ENCODE measurements at regions of chr7 and their contacts with region 1.

Region 1: GRCh38 chr7:156640257-156640948 is at the start of gene RNF32:
- DNase-seq: peak; percentile 98
- ATAC-seq: peak; percentile 82
- H3K4me3 ChIP-seq: peak within 1 kb of the TSS in 4 of 5 experiments; percentile 64 to 96 (median 85)
- H3K4me3 Mint-ChIP-seq: peak within 1 kb of the TSS; percentile 96
- H3K27ac ChIP-seq: peak within 1 kb of the TSS; percentile 80 to 98
- H3K27ac Mint-ChIP-seq: peak within 1 kb of the TSS; percentile 97
- H3K4me1 ChIP-seq: peaks cover 11 to 26% of the 10 kb centered on the region in 2 donors
- H3K4me1 Mint-ChIP-seq: peaks cover 36% of the 10 kb centered on the region
- H3K27me3 ChIP-seq: peaks cover 0 to 4% (median 0%) of the 10 kb centered on the region in 4 experiments
- H3K27me3 Mint-ChIP-seq: no peaks in the 10 kb centered on the region
- CTCF ChIP-seq: no peak
- total RNA-seq, gene RNF32: 2.3 and 3.4 TPM in 2 replicates

Region 2: DNA sequence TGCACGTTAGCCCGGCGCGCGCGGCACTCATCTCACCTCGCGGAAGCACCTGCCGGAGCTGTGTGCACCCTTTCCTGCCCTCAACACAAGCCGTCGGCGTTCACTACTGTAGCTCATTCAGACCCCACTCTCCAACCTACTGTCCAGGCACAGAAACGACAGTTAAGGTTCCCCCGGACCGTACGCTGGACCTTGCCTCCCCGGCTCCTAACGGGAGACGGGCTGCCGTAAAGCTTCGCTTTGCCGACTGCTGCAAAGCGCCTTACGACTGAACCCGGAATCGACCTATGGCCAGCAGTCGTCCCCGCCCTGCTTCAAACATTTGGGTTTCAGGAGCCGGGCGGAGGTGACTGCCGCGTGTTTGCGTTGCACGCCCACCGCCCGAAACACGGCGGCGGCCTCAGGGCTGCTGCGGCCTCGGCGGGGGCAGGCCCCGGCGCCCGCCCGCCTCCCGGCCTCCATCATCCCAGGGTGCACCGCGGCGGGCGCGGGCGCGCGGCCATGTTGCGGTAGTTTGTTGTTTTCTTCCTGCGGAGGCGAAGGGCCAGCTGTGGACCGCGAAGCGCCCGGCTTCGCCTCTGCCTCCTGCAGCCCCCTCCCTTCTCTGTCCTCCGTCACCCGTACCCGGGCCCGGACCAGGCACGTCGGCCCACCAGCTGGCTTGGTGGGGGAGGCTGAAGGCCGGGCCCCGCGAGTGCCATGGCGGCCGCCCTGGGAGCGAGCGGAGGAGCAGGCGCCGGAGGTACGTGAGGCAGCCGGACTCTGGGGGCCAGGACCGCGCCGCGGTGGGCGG is 996.0 kb before region 1 on chr7 and contains the start of gene RBM33:
- CTCF ChIA-PET with region 1: no interaction called
- POLR2A ChIA-PET with region 1: no interaction called
- intact Hi-C with region 1: loop called (anchors 5 kb)
- DNase-seq: peak; percentile 93
- ATAC-seq: peak; percentile 74
- H3K4me3 ChIP-seq: peak within 1 kb of the TSS; percentile 70 to 96 (median 90)
- H3K4me3 Mint-ChIP-seq: peak within 1 kb of the TSS; percentile 92
- H3K27ac ChIP-seq: peak within 1 kb of the TSS; percentile 88 to 92
- H3K27ac Mint-ChIP-seq: peak within 1 kb of the TSS; percentile 96
- H3K4me1 ChIP-seq: peaks cover 20 to 25% of the 10 kb centered on the region in 2 donors
- H3K4me1 Mint-ChIP-seq: peaks cover 45% of the 10 kb centered on the region
- H3K27me3 ChIP-seq: no peaks in the 10 kb centered on the region
- H3K27me3 Mint-ChIP-seq: no peaks in the 10 kb centered on the region
- CTCF ChIP-seq: no peak
- total RNA-seq, gene RBM33: 185 and 189 TPM in 2 replicates

Region 3: DNA sequence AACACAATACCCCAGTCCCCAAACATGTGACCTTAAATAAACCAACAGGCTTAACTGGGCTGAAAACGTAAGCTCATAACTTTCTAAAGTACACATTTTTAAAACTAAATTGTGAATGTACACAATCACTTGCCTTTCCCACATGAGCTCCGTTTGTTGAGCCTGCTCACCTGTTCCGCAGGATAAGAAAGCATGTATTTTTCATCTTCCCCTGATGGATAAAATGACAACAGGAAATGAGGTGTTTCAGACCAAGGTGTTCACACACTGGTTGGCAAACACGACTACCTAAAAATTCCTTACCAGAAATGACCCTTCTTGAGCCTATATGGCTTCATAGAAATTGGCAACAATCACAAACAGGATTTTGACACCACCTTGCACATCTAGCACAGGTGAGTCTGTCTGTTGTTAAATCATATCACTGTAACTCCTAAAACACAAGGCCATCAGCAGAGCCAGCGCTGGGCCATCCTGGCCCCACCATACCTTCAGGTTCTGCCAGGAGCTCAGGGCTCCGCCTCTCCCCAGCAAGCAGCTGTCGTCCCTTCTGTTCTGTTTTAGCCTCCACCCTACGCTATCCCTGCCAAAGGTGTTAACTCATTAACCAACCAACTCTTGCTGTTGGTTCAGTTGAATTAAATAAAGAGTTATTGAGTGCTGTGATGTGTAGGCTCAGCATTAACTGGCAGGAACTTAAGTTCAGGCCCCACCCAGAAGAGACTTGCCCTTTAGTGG is 73.4 kb before region 1 on chr7:
- CTCF ChIA-PET with region 1: no interaction called
- POLR2A ChIA-PET with region 1: no interaction called
- intact Hi-C with region 1: no loop called
- DNase-seq: no peak
- ATAC-seq: no peak
- H3K4me3 ChIP-seq: no peak overlapping the region
- H3K4me3 Mint-ChIP-seq: no peak overlapping the region
- H3K27ac ChIP-seq: no peak overlapping the region
- H3K27ac Mint-ChIP-seq: no peak overlapping the region
- H3K4me1 ChIP-seq: no peaks in the 10 kb centered on the region
- H3K4me1 Mint-ChIP-seq: peaks cover 7% of the 10 kb centered on the region
- H3K27me3 ChIP-seq: peaks cover 0 to 2% (median 0%) of the 10 kb centered on the region in 4 experiments
- H3K27me3 Mint-ChIP-seq: peaks cover 13% of the 10 kb centered on the region
- CTCF ChIP-seq: no peak

Region 4: GRCh38 chr7:156693627-156694026 is 53.2 kb after region 1 on chr7:
- CTCF ChIA-PET with region 1: no interaction called
- POLR2A ChIA-PET with region 1: no interaction called
- intact Hi-C with region 1: no loop called
- DNase-seq: no peak
- ATAC-seq: no peak
- H3K4me3 ChIP-seq: no peak overlapping the region
- H3K4me3 Mint-ChIP-seq: no peak overlapping the region
- H3K27ac ChIP-seq: no peak overlapping the region
- H3K27ac Mint-ChIP-seq: no peak overlapping the region
- H3K4me1 ChIP-seq: no peaks in the 10 kb centered on the region
- H3K4me1 Mint-ChIP-seq: no peaks in the 10 kb centered on the region
- H3K27me3 ChIP-seq: no peaks in the 10 kb centered on the region
- H3K27me3 Mint-ChIP-seq: no peaks in the 10 kb centered on the region
- CTCF ChIP-seq: no peak

Region 5: DNA sequence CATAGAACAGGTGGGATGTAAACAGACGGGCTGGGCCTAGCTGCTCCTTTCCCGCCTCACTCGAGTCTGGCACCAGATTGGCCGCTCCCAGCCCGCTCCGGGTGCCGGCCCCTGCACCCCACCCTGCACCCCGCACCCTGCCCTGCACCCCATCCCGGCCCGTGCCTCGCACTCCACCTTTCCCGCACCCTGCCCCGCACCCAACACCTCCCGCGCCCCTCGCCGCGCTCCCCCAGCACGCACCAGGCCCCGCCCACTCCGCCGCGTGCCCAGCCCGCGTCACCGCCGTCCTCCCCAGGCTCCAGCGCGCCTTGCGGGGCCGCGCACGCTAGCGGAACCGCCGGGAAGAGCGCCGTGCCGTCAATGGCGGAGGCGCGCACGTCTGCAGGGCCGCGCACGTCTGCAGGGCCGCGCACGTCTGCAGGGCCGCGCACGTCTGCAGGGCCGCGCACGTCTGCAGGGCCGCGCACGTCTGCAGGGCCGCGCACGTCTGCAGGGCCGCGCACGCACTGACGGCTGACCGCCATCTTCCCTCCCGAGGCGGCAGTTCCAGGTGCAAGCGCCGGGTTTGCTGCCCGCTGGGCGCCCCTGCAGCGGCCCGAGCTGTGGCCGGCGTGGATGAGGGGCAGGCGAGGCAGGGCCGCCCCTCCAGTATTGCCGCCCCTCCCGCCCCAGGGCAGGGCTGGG is 498.2 kb after region 1 on chr7 and contains the start of gene UBE3C:
- CTCF ChIA-PET with region 1: no interaction called
- POLR2A ChIA-PET with region 1: no interaction called
- intact Hi-C with region 1: loop called (anchors 5 kb)
- DNase-seq: peak; percentile 96
- ATAC-seq: peak; percentile 85
- H3K4me3 ChIP-seq: peak within 1 kb of the TSS; percentile 36 to 88 (median 67)
- H3K4me3 Mint-ChIP-seq: peak within 1 kb of the TSS; percentile 85
- H3K27ac ChIP-seq: peak within 1 kb of the TSS; percentile 80 to 90
- H3K27ac Mint-ChIP-seq: peak within 1 kb of the TSS; percentile 95
- H3K4me1 ChIP-seq: peaks cover 19 to 29% of the 10 kb centered on the region in 2 donors
- H3K4me1 Mint-ChIP-seq: peaks cover 37% of the 10 kb centered on the region
- H3K27me3 ChIP-seq: no peaks in the 10 kb centered on the region
- H3K27me3 Mint-ChIP-seq: no peaks in the 10 kb centered on the region
- CTCF ChIP-seq: no peak
- total RNA-seq, gene UBE3C: 64.2 and 66.5 TPM in 2 replicates